Psoas muscle (tissue), 8 donors: ENCODE measurements at regions of chr2 and their contacts with region 1.

Region 1: DNA sequence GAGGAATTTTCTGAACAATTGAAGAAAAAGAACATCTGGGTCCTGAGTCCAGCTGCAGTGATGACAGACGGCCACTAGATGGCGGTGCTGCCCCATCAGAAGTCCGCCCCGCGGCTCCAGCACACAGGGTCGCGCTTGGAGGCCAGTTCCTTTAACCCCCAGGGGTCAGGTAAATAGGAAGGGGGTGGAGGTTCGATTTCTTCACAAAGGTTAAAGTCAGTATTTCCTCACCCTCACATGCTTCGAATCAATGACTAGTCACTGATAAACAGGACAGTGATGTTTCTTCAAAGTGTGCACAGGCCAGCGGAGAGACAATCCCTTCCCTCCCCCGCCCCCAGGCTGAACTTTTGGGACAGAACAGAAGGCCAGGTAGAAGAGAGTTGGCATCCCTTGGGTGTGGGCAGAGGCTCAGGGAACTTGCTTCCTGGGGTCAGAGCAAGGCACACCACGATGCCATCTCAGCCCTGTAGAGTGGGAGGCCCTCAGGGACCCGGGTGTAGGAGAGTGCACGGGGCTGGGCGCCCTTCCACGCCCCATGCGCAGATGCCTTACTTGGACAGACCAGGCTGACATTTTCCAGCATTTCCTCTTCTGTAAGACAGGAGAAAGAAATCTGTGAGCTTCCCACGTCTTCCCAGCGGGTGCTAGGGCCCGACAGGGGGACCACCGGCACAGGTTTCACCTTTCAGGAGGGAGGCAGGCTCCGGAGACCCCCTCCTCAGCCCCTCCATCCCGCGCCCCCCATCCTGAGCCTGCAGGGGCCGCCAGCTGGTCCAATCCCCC is 722 bp downstream of the APOB start:
- DNase-seq: peak; percentile 54 to 78
- ATAC-seq: peak; percentile 69 to 80 (median 78)
- H3K4me3 ChIP-seq: peak overlapping the region; percentile 51
- H3K27ac ChIP-seq: no peak overlapping the region
- H3K4me1 ChIP-seq: peaks cover 14% of the 10 kb centered on the region
- H3K27me3 ChIP-seq: peaks cover 0 to 12% (median 2%) of the 10 kb centered on the region in 3 donors
- CTCF ChIP-seq: peak; percentile 99

Region 2: GRCh38 chr2:20661067-20661980 is 381.8 kb before region 1 on chr2:
- intact Hi-C with region 1: loop called in 1 of 2 experiments (anchors 10 kb)
- DNase-seq: peak; percentile 65 to 76
- ATAC-seq: peak; percentile 77 to 90 (median 84)
- H3K4me3 ChIP-seq: no peak overlapping the region
- H3K27ac ChIP-seq: no peak overlapping the region
- H3K4me1 ChIP-seq: peaks cover 4% of the 10 kb centered on the region
- H3K27me3 ChIP-seq: peaks cover 0 to 48% (median 25%) of the 10 kb centered on the region in 3 donors
- CTCF ChIP-seq: peak; percentile 98

Region 3: GRCh38 chr2:20913491-20913890 is 129.7 kb before region 1 on chr2:
- intact Hi-C with region 1: no loop called
- DNase-seq: no peak
- ATAC-seq: no peak
- H3K4me3 ChIP-seq: no peak overlapping the region
- H3K27ac ChIP-seq: no peak overlapping the region
- H3K4me1 ChIP-seq: no peaks in the 10 kb centered on the region
- H3K27me3 ChIP-seq: peaks cover 0 to 3% (median 0%) of the 10 kb centered on the region in 3 donors
- CTCF ChIP-seq: no peak

Region 4: DNA sequence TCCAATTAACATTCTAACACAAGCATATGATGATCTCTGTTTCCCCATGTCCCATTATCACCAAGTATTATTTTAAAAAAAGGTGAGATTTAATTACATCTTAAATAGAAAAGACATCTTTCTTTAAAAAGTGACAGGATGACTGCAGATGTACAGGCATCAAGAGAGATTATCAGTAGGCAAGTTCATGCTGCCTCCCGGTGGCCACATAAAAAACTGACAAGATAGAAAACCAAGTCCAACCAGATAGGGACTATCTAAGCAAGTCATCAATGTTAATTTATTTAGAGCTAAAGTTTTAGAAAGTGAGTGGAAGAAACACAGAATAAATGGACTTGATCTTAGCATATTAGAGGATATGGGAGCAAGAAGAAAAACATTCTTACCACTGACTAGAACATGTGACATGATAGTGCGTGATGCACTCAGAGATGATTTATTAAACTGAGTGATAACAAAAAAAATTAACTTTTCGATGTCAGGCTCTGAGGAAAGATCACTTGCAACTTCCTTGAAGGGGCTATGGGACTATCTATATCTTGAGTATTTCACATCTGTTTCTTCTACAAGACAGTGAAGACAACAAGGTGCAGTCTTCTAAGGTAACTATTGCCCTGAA is 75.3 kb after region 1 on chr2:
- intact Hi-C with region 1: loop called (anchors 2 kb)
- DNase-seq: no peak
- ATAC-seq: peak in 3 of 4 donors; percentile 59 to 81 (median 64)
- H3K4me3 ChIP-seq: no peak overlapping the region
- H3K27ac ChIP-seq: no peak overlapping the region
- H3K4me1 ChIP-seq: no peaks in the 10 kb centered on the region
- H3K27me3 ChIP-seq: no peaks in the 10 kb centered on the region
- CTCF ChIP-seq: peak; percentile 59

Region 5: DNA sequence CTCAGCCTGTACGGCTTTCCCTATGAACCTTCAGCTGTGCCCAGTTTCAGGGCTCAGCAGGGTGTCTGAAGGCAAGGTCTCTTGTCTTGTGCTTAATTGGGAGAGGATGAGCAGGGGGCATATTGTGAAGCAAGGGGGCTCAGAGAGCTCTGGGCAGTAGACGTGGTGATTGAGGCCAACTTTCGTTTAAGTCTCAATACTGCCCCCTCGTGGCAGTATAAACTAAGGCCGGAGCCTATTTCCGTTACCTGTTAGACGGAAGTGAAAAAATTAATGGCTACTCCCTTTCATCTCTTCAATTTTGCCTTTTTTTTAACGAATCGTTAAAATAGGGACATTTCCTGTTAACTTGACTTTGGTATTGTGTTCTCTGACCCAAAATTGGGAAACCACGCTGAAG is 274.0 kb after region 1 on chr2:
- intact Hi-C with region 1: loop called (anchors 5 kb)
- DNase-seq: peak; percentile 18 to 42
- ATAC-seq: peak in 1 of 4 donors; percentile 49
- H3K4me3 ChIP-seq: no peak overlapping the region
- H3K27ac ChIP-seq: no peak overlapping the region
- H3K4me1 ChIP-seq: no peaks in the 10 kb centered on the region
- H3K27me3 ChIP-seq: no peaks in the 10 kb centered on the region
- CTCF ChIP-seq: peak; percentile 53